ENCODE measurements at regions of chr1 and their contacts with region 1.

Region 1: GRCh38 chr1:222643938-222644635 is 26.2 kb downstream of the MIA3 start:
- DNase-seq: peak; percentile 98
- H3K4me3 ChIP-seq: peak overlapping the region; percentile 98
- H3K27ac ChIP-seq: peak overlapping the region; percentile 92
- H3K4me1 ChIP-seq: peaks cover 21% of the 10 kb centered on the region
- H3K27me3 ChIP-seq: no peaks in the 10 kb centered on the region

Region 2: DNA sequence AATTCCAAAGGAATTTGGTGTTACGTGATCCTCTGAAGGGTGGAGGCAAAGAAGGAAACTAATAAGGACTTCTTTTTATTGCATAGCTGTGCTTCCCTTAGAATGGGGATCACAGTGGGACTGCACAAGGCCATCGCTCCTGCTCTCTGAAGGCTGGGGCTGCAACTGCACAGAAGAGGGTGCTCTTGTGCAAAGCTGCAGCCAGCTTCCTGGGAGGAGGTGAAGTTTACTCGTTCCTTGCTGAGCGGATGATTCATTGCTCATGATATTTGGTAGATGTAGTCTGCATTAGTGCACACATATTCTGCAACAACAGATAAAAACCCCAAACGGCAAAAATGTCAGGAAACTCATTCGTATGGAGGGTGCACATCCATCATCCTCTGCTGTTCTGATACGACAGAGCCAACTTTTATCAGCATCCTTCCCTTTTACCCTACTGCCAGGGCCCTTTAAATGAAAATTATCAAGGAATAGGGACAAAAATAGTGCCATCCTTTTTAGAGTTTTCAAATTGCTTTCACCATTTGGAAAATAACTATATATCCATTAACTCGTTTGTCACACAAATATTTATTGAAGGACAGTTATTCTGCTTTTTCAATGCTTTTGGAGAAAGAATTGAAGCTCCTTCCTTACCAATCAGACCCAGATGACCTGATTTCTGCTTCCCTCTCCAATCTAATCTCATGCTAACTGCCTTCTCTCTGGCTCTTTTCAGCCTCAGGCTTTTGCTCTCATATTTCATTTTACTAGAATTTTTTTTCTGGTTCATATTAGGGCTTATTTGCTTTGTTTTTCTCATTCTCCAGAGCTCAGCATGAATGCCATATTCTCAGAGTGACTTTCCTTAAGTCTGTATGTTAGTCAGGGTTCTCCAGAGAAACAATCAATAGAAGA is 1165.8 kb before region 1 on chr1:
- in situ Hi-C with region 1: loop called (anchors 25 kb)
- DNase-seq: peak; percentile 94
- H3K4me3 ChIP-seq: no peak overlapping the region
- H3K27ac ChIP-seq: no peak overlapping the region
- H3K4me1 ChIP-seq: peaks cover 11% of the 10 kb centered on the region
- H3K27me3 ChIP-seq: no peaks in the 10 kb centered on the region

Region 3: GRCh38 chr1:221911714-221912113 is 732.4 kb before region 1 on chr1:
- in situ Hi-C with region 1: no loop called
- DNase-seq: no peak
- H3K4me3 ChIP-seq: no peak overlapping the region
- H3K27ac ChIP-seq: no peak overlapping the region
- H3K4me1 ChIP-seq: no peaks in the 10 kb centered on the region
- H3K27me3 ChIP-seq: no peaks in the 10 kb centered on the region

Region 4: GRCh38 chr1:222347627-222348026 is 296.5 kb before region 1 on chr1:
- in situ Hi-C with region 1: no loop called
- DNase-seq: no peak
- H3K4me3 ChIP-seq: no peak overlapping the region
- H3K27ac ChIP-seq: no peak overlapping the region
- H3K4me1 ChIP-seq: no peaks in the 10 kb centered on the region
- H3K27me3 ChIP-seq: peaks cover 14% of the 10 kb centered on the region

Region 5: DNA sequence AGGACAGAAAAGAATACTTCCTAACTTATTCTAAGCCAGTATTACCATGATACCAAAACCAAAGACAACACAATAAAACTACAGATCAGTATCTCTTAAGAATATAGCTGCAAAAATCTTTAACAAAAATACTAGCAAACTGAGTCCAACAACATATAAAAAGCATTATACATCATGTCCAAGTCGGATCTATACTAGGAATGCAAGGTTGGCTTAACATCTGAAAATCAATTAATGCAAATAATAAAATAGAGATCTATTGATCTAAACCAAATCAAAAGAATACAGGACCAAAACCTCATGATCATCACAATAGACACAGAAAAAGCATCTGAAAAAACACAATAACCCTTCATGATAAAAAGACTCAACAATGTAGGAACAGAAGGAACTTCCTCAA is 73.2 kb before region 1 on chr1:
- in situ Hi-C with region 1: no loop called
- DNase-seq: no peak
- H3K4me3 ChIP-seq: no peak overlapping the region
- H3K27ac ChIP-seq: no peak overlapping the region
- H3K4me1 ChIP-seq: no peaks in the 10 kb centered on the region
- H3K27me3 ChIP-seq: no peaks in the 10 kb centered on the region

Region 6: GRCh38 chr1:222754366-222755139 is 110.5 kb after region 1 on chr1:
- in situ Hi-C with region 1: no loop called
- DNase-seq: peak; percentile 99
- H3K4me3 ChIP-seq: peak overlapping the region; percentile 40
- H3K27ac ChIP-seq: peak overlapping the region; percentile 89
- H3K4me1 ChIP-seq: peaks cover 8% of the 10 kb centered on the region
- H3K27me3 ChIP-seq: no peaks in the 10 kb centered on the region

Measured in GM23248 (cell line).